ENCODE measurements at regions of chr9 and their contacts with region 1.

Region 1: GRCh38 chr9:95073021-95073607 is 244.4 kb downstream of the FANCC start:
- DNase-seq: no peak
- H3K4me3 ChIP-seq: no peak overlapping the region
- H3K27ac ChIP-seq: no peak overlapping the region
- H3K4me1 ChIP-seq: no peaks in the 10 kb centered on the region
- CTCF ChIP-seq: no peak

Region 2: GRCh38 chr9:95018099-95018936 is 54.8 kb before region 1 on chr9:
- CTCF ChIA-PET with region 1: no interaction called
- POLR2A ChIA-PET with region 1: no interaction called
- intact Hi-C with region 1: loop called (anchors 10 kb)
- DNase-seq: no peak
- H3K4me3 ChIP-seq: no peak overlapping the region
- H3K27ac ChIP-seq: no peak overlapping the region
- H3K4me1 ChIP-seq: no peaks in the 10 kb centered on the region
- CTCF ChIP-seq: no peak

Region 3: DNA sequence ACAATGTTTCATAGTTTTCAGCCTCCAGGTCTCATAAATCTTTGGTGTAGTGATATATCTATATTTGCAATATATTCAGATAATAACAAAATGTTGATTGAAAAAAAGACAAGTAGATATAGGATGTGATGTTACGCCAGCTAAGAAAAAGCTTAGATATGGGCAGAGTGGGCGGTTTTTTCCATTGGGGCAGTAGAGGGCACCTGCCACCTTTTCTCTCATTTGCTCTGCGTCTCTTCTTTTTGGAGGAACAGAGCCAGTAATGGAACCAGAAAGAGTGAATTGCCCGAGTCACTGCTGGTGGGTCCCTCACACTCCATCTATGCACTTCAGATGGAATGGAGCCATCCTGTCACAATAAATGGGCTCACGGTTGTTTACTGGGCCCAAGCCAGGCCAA is 306.5 kb after region 1 on chr9:
- CTCF ChIA-PET with region 1: no interaction called
- POLR2A ChIA-PET with region 1: no interaction called
- intact Hi-C with region 1: no loop called
- DNase-seq: peak; percentile 45
- H3K4me3 ChIP-seq: no peak overlapping the region
- H3K27ac ChIP-seq: no peak overlapping the region
- H3K4me1 ChIP-seq: no peaks in the 10 kb centered on the region
- CTCF ChIP-seq: peak; percentile 67